ENCODE measurements at regions of chr14 and their contacts with region 1.

Region 1: GRCh38 chr14:60248697-60249318 is at the start of gene PPM1A:
- DNase-seq: peak; percentile 98
- H3K4me3 ChIP-seq: peak within 1 kb of the TSS; percentile 87 to 95 (median 90)
- H3K27ac ChIP-seq: peak within 1 kb of the TSS; percentile 97 to 100 (median 98)
- H3K4me1 ChIP-seq: peaks cover 0 to 44% (median 34%) of the 10 kb centered on the region in 4 donors
- H3K27me3 ChIP-seq: no peaks in the 10 kb centered on the region
- CTCF ChIP-seq: no peak
- EP300 ChIP-seq: peak in 2 of 4 donors; percentile 54 to 76
- POLR2A ChIP-seq: peak; percentile 88 to 92
- total RNA-seq, gene PPM1A: 39.2 to 60.9 (median 54.1) TPM

Region 2: GRCh38 chr14:59483900-59484638 is 764.7 kb before region 1 on chr14 and contains the starts of genes JKAMP and L3HYPDH:
- intact Hi-C with region 1: loop called (anchors 5 kb)
- DNase-seq: peak; percentile 98
- H3K4me3 ChIP-seq: peak within 1 kb of the TSS; percentile 71 to 94 (median 79)
- H3K27ac ChIP-seq: peak within 1 kb of the TSS; percentile 90 to 95 (median 94)
- H3K4me1 ChIP-seq: peaks cover 0 to 70% (median 53%) of the 10 kb centered on the region in 4 donors
- H3K27me3 ChIP-seq: no peaks in the 10 kb centered on the region
- CTCF ChIP-seq: peak; percentile 38 to 68 (median 52)
- EP300 ChIP-seq: peak in 1 of 4 donors; percentile 37
- POLR2A ChIP-seq: peak; percentile 71 to 74
- total RNA-seq, gene JKAMP: 26.6 to 49.0 (median 37.5) TPM
- total RNA-seq, gene L3HYPDH: 23.9 to 46.0 (median 30.4) TPM

Region 3: GRCh38 chr14:60091550-60092530 is 157.0 kb before region 1 on chr14 and contains the start of gene PCNX4:
- intact Hi-C with region 1: loop called (anchors 1 kb)
- DNase-seq: peak; percentile 99
- H3K4me3 ChIP-seq: peak within 1 kb of the TSS; percentile 58 to 65 (median 62)
- H3K27ac ChIP-seq: peak within 1 kb of the TSS; percentile 94 to 97 (median 95)
- H3K4me1 ChIP-seq: peaks cover 0 to 32% (median 25%) of the 10 kb centered on the region in 4 donors
- H3K27me3 ChIP-seq: no peaks in the 10 kb centered on the region
- CTCF ChIP-seq: no peak
- EP300 ChIP-seq: peak; percentile 38 to 87 (median 74)
- POLR2A ChIP-seq: peak; percentile 77 to 78
- total RNA-seq, gene PCNX4: 43.8 to 55.9 (median 44.3) TPM

Region 4: DNA sequence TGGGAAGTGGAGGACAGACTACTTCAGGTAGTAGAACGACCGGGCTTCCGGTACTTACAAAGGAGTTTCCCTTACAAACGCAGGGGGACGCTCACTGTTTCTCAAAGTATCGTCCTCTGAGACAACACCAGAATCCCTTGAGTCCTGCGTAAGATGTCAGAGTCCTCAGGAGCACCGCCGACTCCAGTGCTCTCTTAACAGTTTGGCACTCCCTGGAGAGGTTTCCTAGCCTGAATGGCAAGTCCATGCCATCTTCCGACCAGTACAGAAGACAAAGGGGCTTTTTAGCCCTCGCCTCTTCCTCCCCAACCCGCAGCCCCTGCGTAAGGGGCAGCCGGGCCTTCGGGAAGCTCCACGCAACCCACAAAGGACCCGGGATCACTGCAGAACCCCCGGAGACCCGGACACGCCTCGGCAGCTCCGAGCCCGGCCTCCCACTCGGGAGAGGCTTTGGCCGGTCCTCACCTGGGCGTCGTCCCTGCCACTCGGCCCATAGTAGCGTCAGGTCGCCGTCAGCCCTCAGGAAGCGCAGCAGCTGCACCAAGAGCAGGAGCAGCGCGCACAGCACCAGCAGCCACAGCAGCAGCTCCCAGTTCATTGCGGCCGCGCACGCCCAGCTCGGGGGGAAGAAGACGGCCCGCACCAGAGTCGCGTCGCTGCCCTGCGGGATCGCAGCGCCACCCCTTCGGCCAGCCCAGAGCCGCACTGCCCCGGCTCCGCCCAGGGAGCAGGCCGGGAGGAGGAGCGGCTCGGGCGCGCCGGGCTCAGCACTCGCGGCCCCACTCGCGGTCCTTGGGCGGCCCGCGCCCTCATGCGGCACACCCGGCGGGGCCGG is 83.9 kb before region 1 on chr14 and contains the start of gene DHRS7:
- intact Hi-C with region 1: loop called (anchors 5 kb)
- DNase-seq: peak; percentile 91
- H3K4me3 ChIP-seq: peak within 1 kb of the TSS; percentile 65 to 84 (median 77)
- H3K27ac ChIP-seq: peak within 1 kb of the TSS; percentile 86 to 97 (median 92)
- H3K4me1 ChIP-seq: peaks cover 0 to 25% (median 19%) of the 10 kb centered on the region in 4 donors
- H3K27me3 ChIP-seq: no peaks in the 10 kb centered on the region
- CTCF ChIP-seq: peak in 1 of 4 experiments; percentile 64
- EP300 ChIP-seq: no peak
- POLR2A ChIP-seq: peak; percentile 27 to 55
- total RNA-seq, gene DHRS7: 43.7 to 70.9 (median 59.7) TPM

Region 5: GRCh38 chr14:60184146-60184904 is 64.5 kb before region 1 on chr14:
- intact Hi-C with region 1: no loop called
- DNase-seq: no peak
- H3K4me3 ChIP-seq: peak overlapping the region; percentile 4 to 43 (median 38)
- H3K27ac ChIP-seq: peak overlapping the region; percentile 28 to 58 (median 48)
- H3K4me1 ChIP-seq: peaks cover 0 to 28% (median 11%) of the 10 kb centered on the region in 4 donors
- H3K27me3 ChIP-seq: no peaks in the 10 kb centered on the region
- CTCF ChIP-seq: peak; percentile 44 to 80 (median 72)
- EP300 ChIP-seq: no peak
- POLR2A ChIP-seq: no peak

Region 6: GRCh38 chr14:60215127-60215444 is 33.7 kb before region 1 on chr14:
- intact Hi-C with region 1: loop called (anchors 1 kb)
- DNase-seq: no peak
- H3K4me3 ChIP-seq: no peak overlapping the region
- H3K27ac ChIP-seq: peak overlapping the region; percentile 50 to 85 (median 73)
- H3K4me1 ChIP-seq: peaks cover 0 to 50% (median 38%) of the 10 kb centered on the region in 4 donors
- H3K27me3 ChIP-seq: no peaks in the 10 kb centered on the region
- CTCF ChIP-seq: no peak
- EP300 ChIP-seq: no peak
- POLR2A ChIP-seq: no peak

Measured in sigmoid colon (tissue), 7 donors.